ENCODE measurements at regions of chr4 and their contacts with region 1.

Region 1: GRCh38 chr4:184384056-184384809 is 90.1 kb downstream of the IRF2 start:
- DNase-seq: no peak
- H3K4me3 Mint-ChIP-seq: peak overlapping the region; percentile 57
- H3K27ac Mint-ChIP-seq: peak overlapping the region; percentile 80
- H3K4me1 Mint-ChIP-seq: peaks cover 76% of the 10 kb centered on the region
- H3K27me3 Mint-ChIP-seq: no peaks in the 10 kb centered on the region

Region 2: DNA sequence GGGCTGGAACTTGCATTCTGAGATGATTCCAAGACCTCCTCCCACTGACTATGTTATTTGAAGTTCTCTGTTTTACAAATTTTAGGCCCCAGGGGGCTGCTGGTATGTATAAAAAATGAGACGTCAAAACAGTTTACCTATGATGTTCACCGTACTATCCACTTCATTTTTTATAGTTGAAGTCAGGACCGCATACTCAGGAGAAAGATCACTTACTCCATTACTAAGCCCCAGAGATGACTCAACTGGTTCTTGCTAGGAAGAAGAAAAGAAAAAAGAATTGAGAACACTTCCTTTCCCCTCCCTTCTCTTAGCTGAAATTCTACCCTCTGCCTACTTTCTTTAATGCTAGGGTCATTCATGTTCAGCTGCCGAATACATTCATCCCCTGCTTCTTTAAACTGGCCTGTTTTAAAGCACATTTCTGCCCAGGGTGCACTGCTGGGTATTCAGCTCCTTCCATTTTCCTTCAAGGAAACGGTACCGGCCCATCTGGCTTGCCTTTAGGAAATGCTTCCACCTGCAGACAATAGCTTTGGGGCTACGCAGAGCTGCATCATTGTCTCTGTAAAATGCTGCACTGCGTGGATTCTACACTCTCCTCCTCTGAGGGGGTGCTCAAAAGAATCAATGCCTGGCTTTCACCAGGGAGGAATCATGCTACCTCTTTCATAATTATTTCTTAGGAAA is 23.9 kb after region 1 on chr4:
- intact Hi-C with region 1: loop called (anchors 2 kb)
- DNase-seq: no peak
- H3K4me3 Mint-ChIP-seq: peak overlapping the region; percentile 67
- H3K27ac Mint-ChIP-seq: peak overlapping the region; percentile 88
- H3K4me1 Mint-ChIP-seq: peaks cover 71% of the 10 kb centered on the region
- H3K27me3 Mint-ChIP-seq: no peaks in the 10 kb centered on the region

Measured in activated T-helper 1 cell treated with anti-CD3 and anti-CD28 coated beads, Interleukin-12 subunit alpha, Interleukin-12 subunit beta, Interleukin-2, Interleukin-4 antibody, amounts not matched to agents 30 ng/mL and 10 ng/mL and 1 ng/mL, durations not matched to agents 14 hours and 24 hours and 36 hours (primary cell).